ENCODE measurements at regions of chr7 and their contacts with region 1.

Region 1: DNA sequence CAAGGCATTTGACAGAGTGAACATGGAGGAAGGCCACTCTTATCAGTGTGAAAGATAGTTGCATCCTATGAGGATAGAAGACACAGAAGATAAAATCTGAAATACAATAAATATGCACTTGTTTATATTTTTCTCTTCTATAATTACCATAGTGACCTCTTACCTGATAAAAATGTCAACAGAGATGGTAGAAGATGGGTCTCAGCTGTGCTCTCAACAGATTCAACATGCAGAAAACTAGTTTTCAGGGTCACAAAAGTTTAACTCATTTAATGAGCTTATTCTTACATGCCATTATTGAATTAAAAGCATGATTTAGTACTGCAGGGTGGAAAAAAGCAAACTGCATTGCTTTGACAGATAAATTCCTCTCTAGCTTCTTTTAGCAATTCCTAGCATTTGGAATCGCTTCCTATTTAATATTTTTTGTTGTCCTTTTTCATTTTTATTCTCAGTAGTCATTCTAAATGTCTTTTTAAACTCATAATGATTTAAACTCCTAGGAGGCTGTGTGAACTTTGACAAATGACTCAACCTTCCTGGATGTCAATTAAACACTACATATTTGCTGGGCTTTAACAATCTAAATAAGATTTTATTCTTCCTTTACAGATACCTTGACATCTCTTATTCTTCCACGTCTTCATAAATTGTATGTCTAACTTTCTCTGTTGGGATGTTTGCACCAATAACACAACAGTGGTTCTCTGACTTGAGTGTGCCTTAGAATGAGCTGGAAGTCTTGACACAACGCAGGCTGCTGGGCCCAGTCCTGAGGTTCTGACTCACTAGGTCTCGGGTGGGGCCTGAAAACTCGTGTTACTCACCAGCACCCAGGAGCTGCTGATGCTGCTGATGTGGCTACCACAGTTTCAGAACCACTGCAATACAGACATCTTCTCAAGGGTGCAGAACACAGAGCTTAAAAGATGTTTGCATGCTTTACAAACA is 565.5 kb upstream of the IGFBP3 start:
- DNase-seq: peak in 1 of 2 donors; percentile 13
- ATAC-seq: peak in 3 of 8 donors; percentile 74 to 95 (median 80)
- H3K4me3 ChIP-seq: no peak overlapping the region
- H3K27ac ChIP-seq: no peak overlapping the region
- H3K4me1 ChIP-seq: peaks cover 0 to 5% (median 0%) of the 10 kb centered on the region in 9 donors
- H3K27me3 ChIP-seq: no peaks in the 10 kb centered on the region
- CTCF ChIP-seq: no peak

Region 2: DNA sequence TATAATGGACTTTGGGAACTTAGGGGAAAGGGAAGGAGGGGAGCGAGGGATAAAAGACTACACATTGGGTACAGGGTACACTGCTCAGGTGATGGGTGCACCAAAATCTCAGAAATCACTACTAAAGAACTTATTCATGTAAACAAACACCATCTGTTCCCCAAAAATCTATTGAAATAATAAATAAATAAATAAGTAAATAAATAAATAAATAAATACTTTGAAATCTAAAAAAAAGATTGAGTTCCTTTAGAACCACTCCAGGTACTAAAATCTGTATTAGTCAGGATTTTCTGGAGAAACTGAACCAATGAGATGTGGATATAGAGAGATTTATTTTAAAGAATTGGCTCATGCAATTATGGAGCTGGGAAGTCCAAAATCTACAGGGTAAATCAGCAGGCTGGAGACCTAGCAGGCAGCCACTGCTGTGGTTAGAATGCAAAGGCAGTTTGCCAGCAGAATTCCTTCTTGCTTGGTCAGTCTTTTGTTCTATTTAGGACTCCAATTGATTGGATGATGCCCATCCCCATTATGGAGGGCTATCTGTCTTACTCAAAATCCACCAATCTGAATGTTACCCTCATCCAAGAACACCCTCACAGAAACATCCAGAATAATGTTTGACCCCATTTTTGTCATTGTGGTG is 589.4 kb before region 1 on chr7:
- intact Hi-C with region 1: no loop called
- DNase-seq: no peak
- ATAC-seq: no peak
- H3K4me3 ChIP-seq: no peak overlapping the region
- H3K27ac ChIP-seq: no peak overlapping the region
- H3K4me1 ChIP-seq: no peaks in the 10 kb centered on the region
- H3K27me3 ChIP-seq: peaks cover 0 to 20% (median 13%) of the 10 kb centered on the region in 7 donors
- CTCF ChIP-seq: no peak

Region 3: DNA sequence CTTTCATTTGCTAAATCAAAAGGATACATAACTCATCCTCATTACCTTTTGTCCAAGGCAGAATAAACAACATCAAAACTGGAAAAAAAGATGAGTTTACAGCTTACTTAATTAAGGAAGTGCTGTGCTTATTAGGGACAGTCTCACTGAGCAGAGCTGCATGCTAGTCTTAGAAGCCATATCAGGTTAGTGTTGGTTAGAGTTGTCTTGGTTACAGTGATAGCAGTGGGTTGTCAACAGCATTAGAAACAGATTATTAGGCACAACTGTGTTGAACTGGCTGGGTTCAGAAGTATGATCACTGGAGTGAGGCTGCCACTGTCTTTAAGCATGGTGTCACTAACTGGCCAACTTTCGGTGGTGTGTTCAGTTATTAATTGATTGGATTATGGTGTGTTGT is 61.6 kb before region 1 on chr7:
- intact Hi-C with region 1: loop called in 1 of 10 experiments (anchors 10 kb)
- DNase-seq: no peak
- ATAC-seq: peak in 2 of 8 donors; percentile 42 to 49
- H3K4me3 ChIP-seq: no peak overlapping the region
- H3K27ac ChIP-seq: no peak overlapping the region
- H3K4me1 ChIP-seq: peaks cover 0 to 8% (median 0%) of the 10 kb centered on the region in 9 donors
- H3K27me3 ChIP-seq: no peaks in the 10 kb centered on the region
- CTCF ChIP-seq: no peak